Adrenal gland (tissue), 19 donors: ENCODE measurements at regions of chr11 and their contacts with region 1.

Region 1: GRCh38 chr11:44893846-44894617 is 56.7 kb downstream of the TP53I11 start:
- DNase-seq: peak; percentile 63 to 88 (median 78)
- H3K4me3 ChIP-seq: no peak overlapping the region
- H3K27ac ChIP-seq: peak overlapping the region; percentile 18 to 78 (median 31)
- H3K4me1 ChIP-seq: peaks cover 3 to 18% of the 10 kb centered on the region in 2 donors
- H3K27me3 ChIP-seq: no peaks in the 10 kb centered on the region
- CTCF ChIP-seq: peak; percentile 69 to 94 (median 90)
- POLR2A ChIP-seq: no peak

Region 2: DNA sequence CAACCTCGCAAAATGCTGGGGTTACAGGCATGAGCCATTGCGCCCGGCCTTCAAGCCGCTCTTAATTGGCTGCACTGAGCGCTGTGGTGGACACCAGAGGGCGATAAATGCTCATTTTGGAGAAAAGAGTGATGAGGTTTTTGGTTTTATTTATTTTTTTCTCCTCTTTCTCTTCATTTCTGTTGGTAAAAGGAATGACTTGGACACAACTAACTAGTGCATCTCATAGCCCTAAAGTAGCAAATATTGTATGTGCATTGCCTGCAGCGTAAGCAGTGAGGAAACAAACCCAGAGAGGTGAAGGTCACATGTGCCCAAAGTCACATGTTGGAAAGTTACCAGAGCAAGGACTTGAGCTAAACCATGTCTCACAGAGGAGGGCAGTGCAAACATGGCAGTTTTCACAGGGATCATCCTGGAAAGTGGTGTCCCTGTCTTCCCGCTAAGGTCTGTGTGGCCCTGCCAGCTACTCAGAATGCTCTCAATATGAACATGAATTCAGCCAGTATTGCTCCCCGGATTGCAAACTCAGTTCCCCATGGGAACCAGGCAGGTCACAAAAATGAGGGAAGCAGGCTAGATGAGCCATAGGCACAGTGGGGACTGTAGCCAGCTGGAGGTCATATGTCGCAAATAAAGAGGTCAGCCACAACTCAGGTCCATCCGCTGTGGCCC is 337.2 kb before region 1 on chr11:
- intact Hi-C with region 1: loop called in 1 of 2 experiments (anchors 10 kb)
- DNase-seq: peak; percentile 63 to 87 (median 76)
- H3K4me3 ChIP-seq: no peak overlapping the region
- H3K27ac ChIP-seq: peak overlapping the region in 3 of 5 donors; percentile 9 to 53 (median 33)
- H3K4me1 ChIP-seq: peaks cover 0 to 12% of the 10 kb centered on the region in 2 donors
- H3K27me3 ChIP-seq: no peaks in the 10 kb centered on the region
- CTCF ChIP-seq: peak; percentile 51 to 97 (median 87)
- POLR2A ChIP-seq: no peak

Region 3: GRCh38 chr11:44785856-44786606 is 108.0 kb before region 1 on chr11:
- intact Hi-C with region 1: loop called in 1 of 2 experiments (anchors 10 kb)
- DNase-seq: no peak
- H3K4me3 ChIP-seq: no peak overlapping the region
- H3K27ac ChIP-seq: no peak overlapping the region
- H3K4me1 ChIP-seq: peaks cover 7 to 28% of the 10 kb centered on the region in 2 donors
- H3K27me3 ChIP-seq: no peaks in the 10 kb centered on the region
- CTCF ChIP-seq: peak in 1 of 6 experiments; percentile 16
- POLR2A ChIP-seq: no peak

Region 4: DNA sequence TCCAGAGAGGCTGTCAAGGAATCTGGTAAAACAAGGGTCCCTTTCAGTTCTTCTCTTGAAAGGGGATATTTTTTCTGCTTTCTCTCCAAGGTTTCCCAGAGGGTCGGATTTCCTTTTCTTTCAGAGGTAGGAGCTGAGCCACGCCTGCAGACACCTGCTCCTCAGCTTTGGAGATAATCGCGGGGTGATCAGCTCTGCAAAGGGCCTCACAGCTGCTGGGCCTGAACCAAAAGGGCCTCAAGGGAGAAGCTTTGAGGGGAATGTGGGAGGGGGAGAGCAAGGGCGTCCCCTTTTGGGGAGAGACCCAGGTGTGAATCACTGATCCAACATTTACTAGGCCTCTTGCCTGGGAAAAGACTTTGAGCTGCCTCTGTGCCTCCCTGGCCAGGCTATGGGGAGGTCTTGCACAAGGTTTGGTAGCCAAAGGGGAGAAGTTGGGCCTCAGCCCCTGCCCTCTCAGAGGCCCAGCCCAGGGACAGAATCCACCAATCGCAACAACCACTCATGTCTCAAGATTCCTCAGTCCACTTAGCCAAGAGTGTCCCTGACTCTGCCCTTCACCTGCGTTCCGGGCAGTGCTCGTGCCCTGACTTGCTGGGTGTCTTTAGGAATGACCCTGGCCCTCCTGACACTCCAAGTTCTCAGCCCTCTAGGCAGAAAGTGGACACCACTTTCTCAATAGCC is 70.6 kb after region 1 on chr11:
- intact Hi-C with region 1: no loop called
- DNase-seq: no peak
- H3K4me3 ChIP-seq: no peak overlapping the region
- H3K27ac ChIP-seq: no peak overlapping the region
- H3K4me1 ChIP-seq: no peaks in the 10 kb centered on the region
- H3K27me3 ChIP-seq: no peaks in the 10 kb centered on the region
- CTCF ChIP-seq: no peak
- POLR2A ChIP-seq: no peak

Region 5: DNA sequence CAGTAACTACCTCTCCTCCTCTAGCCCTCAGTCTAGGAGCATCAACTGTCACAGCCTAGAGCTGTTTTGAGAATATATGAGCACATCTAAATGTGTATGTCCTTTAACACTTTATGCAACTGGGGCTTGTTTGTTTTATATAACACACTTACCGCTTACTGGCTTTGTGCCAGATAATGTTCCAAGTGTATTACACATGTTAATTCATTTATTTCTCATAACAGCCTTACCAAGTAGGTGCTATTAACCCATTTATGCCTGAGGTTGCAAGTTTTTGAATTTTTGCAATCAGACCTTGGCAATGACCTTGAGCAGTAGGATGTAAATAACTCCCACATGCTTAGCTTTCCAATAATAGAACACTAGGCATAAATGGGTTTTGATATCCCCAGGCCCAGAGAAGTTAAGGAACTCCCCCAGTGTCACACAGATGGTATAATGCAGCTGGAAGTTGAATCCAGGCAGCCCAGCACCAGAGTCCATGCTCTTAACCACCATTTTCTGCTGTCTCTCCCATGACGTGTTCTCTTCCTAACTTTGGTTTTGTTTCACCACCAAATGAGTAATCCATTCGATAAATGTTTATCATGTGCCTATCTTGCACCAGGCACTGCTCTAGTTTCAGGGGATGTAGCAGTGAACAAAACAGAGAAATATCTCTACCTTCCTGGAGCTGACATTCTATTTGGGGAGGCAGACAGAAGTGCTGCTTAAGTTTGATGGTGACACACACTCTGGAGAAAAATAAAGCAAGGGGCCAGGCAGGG is 275.5 kb after region 1 on chr11:
- intact Hi-C with region 1: no loop called
- DNase-seq: peak in 1 of 7 donors; percentile 7
- H3K4me3 ChIP-seq: no peak overlapping the region
- H3K27ac ChIP-seq: no peak overlapping the region
- H3K4me1 ChIP-seq: peaks cover 7 to 17% of the 10 kb centered on the region in 2 donors
- H3K27me3 ChIP-seq: no peaks in the 10 kb centered on the region
- CTCF ChIP-seq: no peak
- POLR2A ChIP-seq: no peak